ENCODE measurements at regions of chr17 and their contacts with region 1.

Region 1: GRCh38 chr17:81094509-81095382 is 59.8 kb downstream of the BAIAP2 start:
- DNase-seq: peak in 4 of 5 donors; percentile 36 to 72 (median 52)
- ATAC-seq: peak in 3 of 4 donors; percentile 10 to 48 (median 11)
- H3K4me3 ChIP-seq: no peak overlapping the region
- H3K27ac ChIP-seq: peak overlapping the region in 4 of 12 donors; percentile 10 to 80 (median 24)
- H3K4me1 ChIP-seq: peaks cover 0 to 48% (median 15%) of the 10 kb centered on the region in 12 donors
- H3K27me3 ChIP-seq: no peaks in the 10 kb centered on the region
- CTCF ChIP-seq: no peak
- POLR2A ChIP-seq: no peak

Region 2: DNA sequence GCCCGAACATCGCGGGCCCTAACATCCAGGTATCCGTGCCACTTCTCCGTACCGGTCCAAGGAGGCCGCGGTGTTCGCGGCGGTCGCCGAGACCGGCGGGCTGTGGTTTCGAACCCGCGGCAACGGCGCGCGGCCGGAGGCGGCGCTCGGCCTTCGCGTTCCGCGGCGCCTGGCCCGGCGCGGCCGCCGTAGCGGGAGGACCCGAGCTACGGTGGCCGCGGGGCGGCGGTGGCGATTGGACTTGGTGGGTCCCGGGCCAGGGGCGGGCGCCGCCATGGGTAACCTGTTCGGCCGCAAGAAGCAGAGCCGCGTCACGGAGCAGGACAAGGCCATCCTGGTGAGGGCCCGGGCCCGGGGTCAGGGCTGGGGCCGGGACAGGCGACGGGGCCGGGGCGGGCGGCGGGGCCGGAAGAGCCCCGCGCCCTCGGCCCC is 103.1 kb before region 1 on chr17 and contains the start of gene CHMP6:
- intact Hi-C with region 1: loop called in 1 of 10 experiments (anchors 5 kb)
- DNase-seq: peak; percentile 80 to 90 (median 87)
- ATAC-seq: peak in 3 of 4 donors; percentile 50 to 69 (median 69)
- H3K4me3 ChIP-seq: peak within 1 kb of the TSS; percentile 68 to 100 (median 96)
- H3K27ac ChIP-seq: peak within 1 kb of the TSS in 11 of 12 donors; percentile 41 to 86 (median 64)
- H3K4me1 ChIP-seq: peaks cover 0 to 40% (median 27%) of the 10 kb centered on the region in 12 donors
- H3K27me3 ChIP-seq: peaks cover 0 to 7% (median 0%) of the 10 kb centered on the region in 9 donors
- CTCF ChIP-seq: peak in 7 of 12 donors; percentile 28 to 48 (median 36)
- POLR2A ChIP-seq: peak in 1 of 2 donors; percentile 48
- total RNA-seq, gene CHMP6: 17.9 to 25.9 (median 19.4) TPM

Region 3: DNA sequence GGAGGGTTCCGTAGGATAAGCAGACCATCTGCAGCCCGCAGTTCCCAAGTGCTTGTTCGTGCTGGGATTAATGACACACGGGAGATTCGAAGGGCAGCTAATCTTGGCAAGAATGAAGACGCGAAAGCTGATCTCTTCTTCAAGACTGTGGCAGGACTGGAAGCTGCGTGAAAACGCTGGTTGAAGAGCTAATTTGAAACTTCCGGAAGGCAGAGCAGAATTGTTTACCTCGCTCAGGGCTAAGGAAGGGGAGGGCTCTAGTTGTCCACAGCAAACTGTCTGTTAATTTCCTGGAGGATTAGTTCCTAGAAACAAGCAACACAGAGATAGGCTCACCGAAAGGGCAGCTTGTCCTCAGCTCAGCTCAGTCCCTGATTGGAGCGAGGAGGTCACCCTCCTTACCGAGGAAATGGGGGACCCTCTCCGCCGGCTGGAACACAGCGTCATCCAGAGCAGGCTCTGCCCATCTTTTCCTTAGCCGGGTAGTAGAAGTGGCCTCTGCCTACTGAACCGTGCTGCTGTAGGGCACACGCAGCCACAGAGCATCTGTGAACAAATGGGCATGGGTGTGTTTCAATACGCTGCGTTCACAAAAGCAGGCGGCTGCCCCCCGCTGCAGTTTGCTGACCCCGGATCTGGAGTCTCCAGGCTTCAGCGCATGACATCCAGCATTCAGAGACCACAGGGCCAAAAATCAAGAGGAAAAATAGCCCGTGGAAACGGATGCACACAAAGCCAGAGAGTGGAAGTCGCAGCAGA is 76.5 kb before region 1 on chr17:
- intact Hi-C with region 1: loop called in 2 of 10 experiments (anchors 1 to 5 kb)
- DNase-seq: peak in 1 of 5 donors; percentile 40
- ATAC-seq: peak; percentile 41 to 71 (median 45)
- H3K4me3 ChIP-seq: peak overlapping the region in 11 of 12 donors; percentile 16 to 56 (median 41)
- H3K27ac ChIP-seq: peak overlapping the region; percentile 8 to 87 (median 71)
- H3K4me1 ChIP-seq: peaks cover 0 to 30% (median 19%) of the 10 kb centered on the region in 12 donors
- H3K27me3 ChIP-seq: no peaks in the 10 kb centered on the region
- CTCF ChIP-seq: no peak
- POLR2A ChIP-seq: no peak

Region 4: DNA sequence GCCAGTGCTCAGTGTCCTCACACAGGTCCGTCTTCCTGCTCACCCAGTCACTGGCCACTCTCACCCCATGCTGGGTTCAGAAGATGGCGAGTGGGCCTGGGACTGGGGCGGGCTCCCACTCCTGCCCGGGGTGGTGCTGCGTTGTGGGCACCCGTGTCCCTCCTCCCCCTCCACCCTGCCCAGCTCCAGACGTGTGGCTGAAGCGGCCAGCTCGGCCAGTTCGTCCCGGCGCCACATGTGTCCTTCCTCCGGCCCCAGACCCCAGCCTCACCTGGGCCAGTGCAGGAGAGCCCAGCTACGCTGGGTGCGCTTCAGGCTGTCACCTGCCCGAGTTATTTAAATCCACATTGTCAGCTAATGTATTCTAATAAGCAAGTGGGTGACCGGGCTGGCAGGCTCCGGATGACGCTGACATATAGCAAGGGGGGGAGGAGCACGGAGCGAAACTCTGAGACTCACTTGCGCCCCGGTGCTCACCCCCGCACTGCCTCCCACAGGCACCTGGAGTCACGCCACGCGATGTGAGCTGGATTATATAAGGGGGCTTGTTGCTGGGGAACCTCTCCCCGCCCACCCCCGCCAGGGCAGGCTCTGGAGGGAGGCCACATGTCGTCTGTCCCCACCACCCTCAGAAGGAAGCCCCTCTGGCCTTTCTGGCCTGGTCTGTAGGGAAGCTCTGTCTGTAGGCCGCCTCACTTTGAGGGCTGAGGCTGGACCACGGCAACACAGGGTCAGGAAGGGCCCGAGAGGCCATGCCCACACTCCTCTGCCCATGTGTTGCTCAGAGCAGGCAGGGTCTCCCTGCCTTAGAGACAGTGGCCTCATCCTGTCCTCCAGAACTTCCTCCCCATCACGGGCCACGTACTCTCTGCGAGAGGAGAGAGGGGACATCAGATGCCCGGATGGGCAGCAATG is 66.9 kb before region 1 on chr17:
- intact Hi-C with region 1: loop called in 5 of 10 experiments (anchors 1 to 5 kb)
- DNase-seq: peak in 1 of 5 donors; percentile 18
- ATAC-seq: no peak
- H3K4me3 ChIP-seq: no peak overlapping the region
- H3K27ac ChIP-seq: no peak overlapping the region
- H3K4me1 ChIP-seq: peaks cover 0 to 38% (median 26%) of the 10 kb centered on the region in 12 donors
- H3K27me3 ChIP-seq: peaks cover 0 to 33% (median 7%) of the 10 kb centered on the region in 9 donors
- CTCF ChIP-seq: no peak
- POLR2A ChIP-seq: no peak

Region 5: GRCh38 chr17:81057079-81057730 is 37.5 kb before region 1 on chr17:
- intact Hi-C with region 1: loop called in 1 of 10 experiments (anchors 1 kb)
- DNase-seq: peak in 3 of 5 donors; percentile 55 to 82 (median 61)
- ATAC-seq: peak; percentile 77 to 89 (median 86)
- H3K4me3 ChIP-seq: no peak overlapping the region
- H3K27ac ChIP-seq: peak overlapping the region; percentile 41 to 92 (median 72)
- H3K4me1 ChIP-seq: peaks cover 6 to 37% (median 26%) of the 10 kb centered on the region in 12 donors
- H3K27me3 ChIP-seq: no peaks in the 10 kb centered on the region
- CTCF ChIP-seq: no peak
- POLR2A ChIP-seq: no peak

Region 6: GRCh38 chr17:82077617-82078358 is 983.0 kb after region 1 on chr17:
- intact Hi-C with region 1: no loop called
- DNase-seq: peak in 2 of 5 donors; percentile 55 to 77
- ATAC-seq: peak in 3 of 4 donors; percentile 25 to 75 (median 43)
- H3K4me3 ChIP-seq: no peak overlapping the region
- H3K27ac ChIP-seq: no peak overlapping the region
- H3K4me1 ChIP-seq: peaks cover 0 to 10% (median 0%) of the 10 kb centered on the region in 12 donors
- H3K27me3 ChIP-seq: no peaks in the 10 kb centered on the region
- CTCF ChIP-seq: peak in 1 of 12 donors; percentile 10
- POLR2A ChIP-seq: no peak

Measured in heart left ventricle (tissue), 16 donors.